ENCODE measurements at regions of chr6 and their contacts with region 1.

Region 1: GRCh38 chr6:134063966-134064445 is 11.6 kb upstream of the SLC2A12 start:
- DNase-seq: peak; percentile 85
- ATAC-seq: peak; percentile 89
- H3K4me3 ChIP-seq: no peak overlapping the region
- H3K27ac ChIP-seq: no peak overlapping the region
- H3K4me1 ChIP-seq: peaks cover 15% of the 10 kb centered on the region
- H3K27me3 ChIP-seq: no peaks in the 10 kb centered on the region
- CTCF ChIP-seq: peak; percentile 96
- POLR2A ChIP-seq: no peak
- RAD21 ChIP-seq: peak; percentile 86

Region 2: GRCh38 chr6:133923938-133924593 is 139.9 kb before region 1 on chr6:
- CTCF ChIA-PET with region 1: interaction called, 18 read pairs
- POLR2A ChIA-PET with region 1: no interaction called
- dilution Hi-C with region 1: no loop called
- in situ Hi-C with region 1: no loop called
- intact Hi-C with region 1: loop called (anchors 1 kb)
- DNase-seq: peak; percentile 84
- ATAC-seq: peak; percentile 96
- H3K4me3 ChIP-seq: no peak overlapping the region
- H3K27ac ChIP-seq: no peak overlapping the region
- H3K4me1 ChIP-seq: no peaks in the 10 kb centered on the region; the same call in 1 of the 2 replicates
- H3K27me3 ChIP-seq: no peaks in the 10 kb centered on the region; the same call in 1 of the 2 replicates
- CTCF ChIP-seq: peak; percentile 93
- POLR2A ChIP-seq: peak; percentile 49; the same call in 1 of the 2 replicates
- RAD21 ChIP-seq: peak; percentile 98

Region 3: DNA sequence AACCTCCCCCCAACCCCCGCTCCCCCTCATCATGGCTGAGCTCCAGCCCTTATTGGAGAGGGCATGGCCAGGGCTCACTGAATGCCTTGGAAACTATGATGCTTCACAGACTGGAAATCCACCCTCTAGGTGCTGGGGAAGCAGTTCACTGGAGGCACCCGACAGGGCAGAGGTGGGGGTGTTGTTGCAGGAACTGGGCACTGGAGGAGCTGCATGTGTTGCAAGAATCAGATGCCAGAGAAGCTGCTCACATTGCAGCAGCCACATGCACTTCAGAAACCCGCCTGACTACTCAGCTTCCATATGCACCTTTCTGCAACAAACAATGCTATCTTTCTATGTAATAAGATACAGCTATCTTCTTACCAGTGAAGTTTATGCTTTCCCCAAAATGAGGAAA is 118.8 kb before region 1 on chr6:
- CTCF ChIA-PET with region 1: interaction called, 3 read pairs
- POLR2A ChIA-PET with region 1: no interaction called
- dilution Hi-C with region 1: no loop called
- in situ Hi-C with region 1: loop called (anchors 10 kb)
- intact Hi-C with region 1: no loop called
- DNase-seq: peak; percentile 29
- ATAC-seq: peak; percentile 37
- H3K4me3 ChIP-seq: no peak overlapping the region
- H3K27ac ChIP-seq: no peak overlapping the region
- H3K4me1 ChIP-seq: no peaks in the 10 kb centered on the region
- H3K27me3 ChIP-seq: no peaks in the 10 kb centered on the region
- CTCF ChIP-seq: no peak
- POLR2A ChIP-seq: no peak
- RAD21 ChIP-seq: no peak

Region 4: DNA sequence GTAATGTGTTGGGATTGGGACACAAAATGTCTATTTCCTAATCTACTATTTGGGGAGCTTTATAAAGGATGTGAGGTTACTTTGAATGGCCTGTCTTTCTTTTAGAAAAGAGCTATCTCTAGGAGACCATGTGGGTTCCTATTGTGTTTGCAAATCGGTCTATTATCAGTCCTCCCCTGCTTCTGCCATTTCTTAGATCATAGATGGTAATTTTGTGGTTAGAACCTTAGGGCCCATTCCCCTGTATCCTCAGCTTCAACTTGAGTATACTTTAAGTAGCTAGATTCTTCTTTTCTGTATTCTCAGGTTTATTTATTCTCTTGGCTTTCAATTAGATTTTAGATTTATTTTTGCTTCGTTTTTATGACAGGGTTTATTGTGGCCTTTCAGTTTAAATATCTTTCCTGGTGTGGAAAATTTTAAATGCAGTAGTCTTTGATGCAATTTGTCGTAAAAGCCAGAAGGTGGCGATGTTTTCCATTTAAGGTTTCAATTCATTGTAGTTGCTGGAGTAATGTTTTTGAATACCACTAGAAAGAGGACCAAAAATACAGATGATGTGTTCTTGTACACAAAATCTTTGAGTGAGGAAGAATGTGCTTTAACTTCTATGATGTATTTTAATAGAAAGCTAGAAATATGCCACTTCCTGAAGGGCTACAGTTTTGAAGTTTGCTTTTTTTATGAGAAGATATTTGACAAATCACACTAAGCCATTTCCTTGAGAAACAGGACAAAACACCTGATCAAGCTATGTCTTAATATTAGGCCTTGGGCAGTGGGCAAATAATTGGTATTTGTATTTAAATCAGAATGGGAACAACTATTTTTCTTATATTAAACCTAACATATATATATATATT is 90.7 kb before region 1 on chr6:
- CTCF ChIA-PET with region 1: interaction called, 21 read pairs
- POLR2A ChIA-PET with region 1: no interaction called
- dilution Hi-C with region 1: no loop called
- in situ Hi-C with region 1: loop called (anchors 5 kb)
- intact Hi-C with region 1: loop called (anchors 1 kb)
- DNase-seq: peak; percentile 72
- ATAC-seq: peak; percentile 74
- H3K4me3 ChIP-seq: no peak overlapping the region
- H3K27ac ChIP-seq: no peak overlapping the region
- H3K4me1 ChIP-seq: peaks cover 2% of the 10 kb centered on the region; the same call in 1 of the 2 replicates
- H3K27me3 ChIP-seq: no peaks in the 10 kb centered on the region
- CTCF ChIP-seq: peak; percentile 80
- POLR2A ChIP-seq: no peak
- RAD21 ChIP-seq: peak; percentile 78

Region 5: GRCh38 chr6:133991096-133991593 is 72.9 kb before region 1 on chr6:
- CTCF ChIA-PET with region 1: interaction called, 4 read pairs
- POLR2A ChIA-PET with region 1: no interaction called
- dilution Hi-C with region 1: no loop called
- in situ Hi-C with region 1: no loop called
- intact Hi-C with region 1: loop called (anchors 5 kb)
- DNase-seq: peak; percentile 90
- ATAC-seq: peak; percentile 92
- H3K4me3 ChIP-seq: no peak overlapping the region
- H3K27ac ChIP-seq: peak overlapping the region; percentile 76
- H3K4me1 ChIP-seq: peaks cover 32% of the 10 kb centered on the region
- H3K27me3 ChIP-seq: no peaks in the 10 kb centered on the region
- CTCF ChIP-seq: no peak
- POLR2A ChIP-seq: no peak
- RAD21 ChIP-seq: no peak

Region 6: GRCh38 chr6:134182528-134182927 is 118.5 kb after region 1 on chr6:
- CTCF ChIA-PET with region 1: no interaction called
- POLR2A ChIA-PET with region 1: no interaction called
- dilution Hi-C with region 1: no loop called
- in situ Hi-C with region 1: no loop called
- intact Hi-C with region 1: no loop called
- DNase-seq: no peak
- ATAC-seq: no peak
- H3K4me3 ChIP-seq: no peak overlapping the region
- H3K27ac ChIP-seq: no peak overlapping the region
- H3K4me1 ChIP-seq: peaks cover 2% of the 10 kb centered on the region; the same call in 1 of the 2 replicates
- H3K27me3 ChIP-seq: no peaks in the 10 kb centered on the region
- CTCF ChIP-seq: no peak
- POLR2A ChIP-seq: no peak
- RAD21 ChIP-seq: no peak